Posterior cingulate gyrus (tissue), 11 donors: ENCODE measurements at regions of chr3 and their contacts with region 1.

Region 1: GRCh38 chr3:65732051-65732935 is 306.4 kb downstream of the MAGI1 start:
- DNase-seq: no peak

Region 2: GRCh38 chr3:65591313-65591712 is 141.0 kb before region 1 on chr3:
- intact Hi-C with region 1: loop called (anchors 2 kb)
- DNase-seq: no peak

Region 3: DNA sequence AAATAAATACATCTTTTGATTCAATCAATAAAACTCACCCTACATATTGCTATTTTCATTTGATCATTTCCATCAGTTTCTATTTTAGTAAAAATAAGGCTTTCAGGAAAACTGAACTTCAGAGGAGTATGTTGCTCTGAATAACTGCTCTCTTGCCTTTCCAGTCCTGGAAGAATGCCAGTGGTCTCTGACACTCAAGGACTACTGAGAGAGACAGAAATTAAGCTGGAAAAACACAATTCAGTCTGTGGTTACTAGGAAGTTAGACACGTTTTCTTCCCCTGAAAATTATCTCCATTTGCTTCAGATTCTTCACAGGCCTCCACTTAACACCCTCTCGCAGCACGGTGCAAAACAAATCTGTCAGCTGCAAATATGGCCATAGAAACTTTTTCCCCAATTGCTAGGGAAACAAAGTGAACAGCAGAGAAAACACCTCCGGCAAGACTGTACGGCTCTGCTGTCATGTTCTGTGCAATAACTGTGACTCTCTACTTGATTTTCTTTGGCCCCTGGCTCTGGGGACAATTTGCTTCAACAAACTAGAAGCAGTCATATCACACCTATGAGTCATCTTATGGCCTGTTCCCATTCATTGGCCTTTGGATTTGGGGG is 46.6 kb before region 1 on chr3:
- intact Hi-C with region 1: no loop called
- DNase-seq: no peak